MCF 10A (cell line): ENCODE measurements at regions of chr6 and their contacts with region 1.

Region 1: DNA sequence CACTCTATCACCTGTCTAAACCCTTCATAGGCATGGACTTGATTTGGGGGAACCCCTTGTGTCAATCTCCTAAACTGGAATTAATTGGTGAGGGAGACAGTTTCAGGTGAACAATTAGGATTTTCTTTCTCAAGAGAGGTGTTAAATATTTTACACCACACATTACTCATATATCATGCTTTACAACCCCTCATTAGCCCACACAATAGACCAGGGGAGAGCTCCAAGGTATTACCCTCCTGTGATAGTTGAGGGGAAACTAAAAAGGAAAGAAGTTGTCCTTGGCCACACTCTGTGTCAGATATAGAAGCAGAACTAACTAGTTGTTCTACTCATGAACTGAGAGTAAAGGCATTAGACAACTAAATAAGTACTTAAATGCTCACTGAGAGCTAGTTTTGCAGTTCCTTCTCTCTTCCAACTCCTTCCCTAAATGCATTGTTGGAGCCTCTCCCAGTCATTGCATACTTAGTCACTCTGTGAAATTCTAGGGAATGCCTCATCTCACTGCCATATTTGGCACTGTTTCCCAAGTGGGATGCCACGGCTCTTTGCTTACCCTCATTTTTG is 183.7 kb upstream of the CEP162 start:
- DNase-seq: peak; percentile 77
- H3K4me3 Mint-ChIP-seq: no peak overlapping the region
- H3K27ac Mint-ChIP-seq: peak overlapping the region; percentile 1
- H3K4me1 Mint-ChIP-seq: peaks cover 15% of the 10 kb centered on the region
- H3K27me3 Mint-ChIP-seq: no peaks in the 10 kb centered on the region
- CTCF ChIP-seq: no peak

Region 2: GRCh38 chr6:84371681-84372080 is 39.5 kb before region 1 on chr6:
- CTCF ChIA-PET with region 1: no interaction called
- POLR2A ChIA-PET with region 1: no interaction called
- intact Hi-C with region 1: no loop called
- DNase-seq: no peak
- H3K4me3 Mint-ChIP-seq: no peak overlapping the region
- H3K27ac Mint-ChIP-seq: no peak overlapping the region
- H3K4me1 Mint-ChIP-seq: no peaks in the 10 kb centered on the region
- H3K27me3 Mint-ChIP-seq: no peaks in the 10 kb centered on the region
- CTCF ChIP-seq: no peak

Region 3: DNA sequence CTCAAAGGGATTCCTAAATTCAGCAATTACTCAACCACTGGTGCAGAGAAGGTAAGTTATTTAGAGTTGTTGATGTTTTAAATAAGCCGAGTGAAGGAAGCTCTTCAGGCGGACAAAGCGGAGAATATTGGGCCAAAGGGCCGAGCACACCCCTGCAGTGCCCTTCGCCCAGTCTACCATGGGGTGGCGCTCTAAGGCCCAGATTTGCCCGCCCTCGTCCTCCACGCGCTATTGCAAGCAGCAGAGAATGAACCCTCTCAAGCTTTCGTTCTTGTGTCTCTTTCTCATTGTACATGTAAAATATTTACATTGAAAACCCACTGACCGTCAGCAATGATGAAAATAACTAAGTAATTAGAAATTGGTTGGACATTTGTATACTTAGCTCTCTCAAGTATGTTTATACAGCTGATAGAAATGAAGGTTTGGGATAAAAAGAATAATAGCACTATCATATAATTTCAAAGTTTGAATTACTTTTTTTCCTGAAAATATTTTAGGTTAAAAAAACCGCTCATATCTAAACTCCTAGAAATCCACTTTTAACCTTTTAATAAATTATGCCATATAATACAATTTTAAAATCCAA is 11.3 kb after region 1 on chr6:
- CTCF ChIA-PET with region 1: interaction called, 10 read pairs
- POLR2A ChIA-PET with region 1: no interaction called
- intact Hi-C with region 1: no loop called
- DNase-seq: peak; percentile 67
- H3K4me3 Mint-ChIP-seq: no peak overlapping the region
- H3K27ac Mint-ChIP-seq: no peak overlapping the region
- H3K4me1 Mint-ChIP-seq: no peaks in the 10 kb centered on the region
- H3K27me3 Mint-ChIP-seq: no peaks in the 10 kb centered on the region
- CTCF ChIP-seq: peak; percentile 78

Region 4: DNA sequence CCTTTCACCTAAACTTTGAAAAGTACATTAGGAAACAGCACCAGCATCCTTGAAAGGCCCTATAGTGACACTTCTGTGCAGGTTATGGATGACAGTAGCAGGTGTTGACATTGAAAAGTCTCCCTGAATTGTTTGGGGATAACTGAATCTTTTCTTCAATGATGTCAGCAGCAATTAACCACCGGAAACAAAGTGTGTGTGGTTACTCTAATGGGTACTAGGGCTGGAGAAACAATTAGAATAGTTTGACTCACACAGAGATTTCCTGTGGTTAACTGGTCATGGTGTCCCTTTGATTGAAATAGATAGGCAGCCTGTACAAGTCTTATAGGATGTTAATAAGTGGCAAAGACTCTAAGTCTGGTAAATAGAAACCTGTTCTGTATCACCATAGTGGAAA is 164.1 kb after region 1 on chr6:
- CTCF ChIA-PET with region 1: no interaction called
- POLR2A ChIA-PET with region 1: no interaction called
- intact Hi-C with region 1: no loop called
- DNase-seq: peak; percentile 20
- H3K4me3 Mint-ChIP-seq: no peak overlapping the region
- H3K27ac Mint-ChIP-seq: no peak overlapping the region
- H3K4me1 Mint-ChIP-seq: peaks cover 5% of the 10 kb centered on the region
- H3K27me3 Mint-ChIP-seq: no peaks in the 10 kb centered on the region
- CTCF ChIP-seq: no peak